Dorsolateral prefrontal cortex (tissue), 120 donors: ENCODE measurements at regions of chr9 and their contacts with region 1.

Region 1: DNA sequence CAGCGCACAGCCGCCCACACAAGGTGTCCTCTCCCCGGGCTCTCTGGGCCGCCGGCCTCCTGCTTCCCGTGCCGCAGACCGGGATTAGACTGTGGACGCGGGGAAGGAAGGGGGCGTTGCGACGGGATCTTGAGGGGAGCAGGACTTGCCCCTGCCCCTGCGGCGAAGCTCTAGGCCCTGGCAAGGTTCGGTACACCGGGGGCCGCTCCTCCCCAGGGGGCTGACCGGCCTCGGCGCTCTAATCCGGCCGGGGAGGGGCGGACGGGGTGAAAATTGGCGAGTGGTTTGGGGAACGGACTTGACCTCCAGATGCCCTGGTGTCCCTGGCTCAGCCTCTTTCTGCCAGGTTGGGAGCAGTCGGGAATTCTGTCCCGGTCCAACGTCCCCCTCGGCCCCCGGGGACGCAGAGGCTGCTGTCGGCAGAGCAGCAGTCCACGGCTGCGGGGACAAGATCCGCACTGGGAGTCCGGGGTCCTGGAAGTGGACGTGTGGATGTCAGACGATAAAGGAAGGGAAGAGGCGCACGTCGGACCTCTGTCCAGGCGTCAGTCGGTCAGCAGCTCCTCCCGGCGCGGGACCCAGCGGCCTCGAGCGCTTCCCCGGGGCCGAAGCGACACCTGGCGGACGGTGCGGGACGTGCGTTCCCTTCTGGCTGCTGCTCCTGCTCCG is 1.9 kb upstream of the CNTFR start:
- DNase-seq: peak; percentile 77 to 93 (median 86)
- H3K4me3 ChIP-seq: peak overlapping the region in 49 of 59 donors; percentile 1 to 78 (median 59)
- H3K27ac ChIP-seq: peak overlapping the region in 42 of 59 donors; percentile 6 to 90 (median 80)
- H3K27me3 ChIP-seq: peaks cover 0 to 4% (median 0%) of the 10 kb centered on the region in 45 donors
- CTCF ChIP-seq: peak; percentile 67 to 98 (median 95)

Region 2: GRCh38 chr9:34328987-34329832 is 262.2 kb before region 1 on chr9 and contains the starts of genes KIF24 and NUDT2:
- intact Hi-C with region 1: loop called (anchors 2 to 5 kb)
- DNase-seq: peak; percentile 95 to 99 (median 98)
- H3K4me3 ChIP-seq: peak within 1 kb of the TSS; percentile 60 to 99 (median 85)
- H3K27ac ChIP-seq: peak within 1 kb of the TSS; percentile 80 to 98 (median 93)
- H3K27me3 ChIP-seq: no peaks in the 10 kb centered on the region
- CTCF ChIP-seq: peak in 29 of 56 donors; percentile 4 to 51 (median 19)
- total RNA-seq, gene KIF24: 0.61 to 3.8 (median 1.6) TPM
- total RNA-seq, gene NUDT2: 9.9 to 32.0 (median 20.6) TPM

Region 3: DNA sequence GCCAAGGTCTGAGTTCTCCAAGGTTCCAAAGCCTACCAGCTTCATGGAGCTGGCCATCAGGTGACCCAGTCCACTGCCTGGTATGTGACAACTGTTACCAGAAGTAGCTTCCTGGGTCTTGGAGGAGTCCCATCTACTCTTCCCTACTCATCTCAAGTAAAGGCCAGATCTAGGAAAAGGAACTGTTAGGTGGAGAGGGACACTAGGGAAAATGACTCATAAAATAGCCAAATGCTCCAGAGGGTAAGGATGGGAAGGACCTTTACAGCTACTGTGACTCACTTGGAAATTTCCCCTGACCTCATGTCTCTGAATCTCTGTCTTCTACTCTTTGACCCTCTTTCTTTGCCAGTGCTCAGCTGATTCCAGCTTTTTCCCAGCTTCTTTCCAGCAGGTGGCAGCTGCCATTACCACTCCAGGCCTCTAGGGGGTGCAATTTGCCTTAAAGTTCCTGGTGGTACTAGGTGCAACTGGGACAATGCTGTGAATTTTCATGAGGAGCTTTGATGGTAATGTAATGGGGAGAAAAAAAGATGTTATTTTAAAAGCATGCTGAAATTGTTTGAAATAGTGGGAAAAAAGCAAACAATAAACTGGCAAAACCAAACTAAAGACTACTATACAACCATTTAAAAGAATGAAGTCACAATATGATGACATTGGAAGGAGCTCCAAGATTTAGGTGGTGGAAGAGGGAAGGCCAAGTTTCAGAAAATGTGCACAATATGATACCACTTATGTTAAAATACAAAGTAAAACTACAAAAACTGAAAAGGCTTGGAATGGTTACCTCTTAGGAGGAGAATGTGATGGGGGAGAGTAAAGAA is 187.6 kb before region 1 on chr9:
- intact Hi-C with region 1: loop called (anchors 5 to 10 kb)
- DNase-seq: peak; percentile 67 to 87 (median 75)
- H3K4me3 ChIP-seq: no peak overlapping the region
- H3K27ac ChIP-seq: peak overlapping the region in 1 of 59 donors; percentile 4
- H3K27me3 ChIP-seq: no peaks in the 10 kb centered on the region
- CTCF ChIP-seq: peak; percentile 83 to 100 (median 98)

Region 4: DNA sequence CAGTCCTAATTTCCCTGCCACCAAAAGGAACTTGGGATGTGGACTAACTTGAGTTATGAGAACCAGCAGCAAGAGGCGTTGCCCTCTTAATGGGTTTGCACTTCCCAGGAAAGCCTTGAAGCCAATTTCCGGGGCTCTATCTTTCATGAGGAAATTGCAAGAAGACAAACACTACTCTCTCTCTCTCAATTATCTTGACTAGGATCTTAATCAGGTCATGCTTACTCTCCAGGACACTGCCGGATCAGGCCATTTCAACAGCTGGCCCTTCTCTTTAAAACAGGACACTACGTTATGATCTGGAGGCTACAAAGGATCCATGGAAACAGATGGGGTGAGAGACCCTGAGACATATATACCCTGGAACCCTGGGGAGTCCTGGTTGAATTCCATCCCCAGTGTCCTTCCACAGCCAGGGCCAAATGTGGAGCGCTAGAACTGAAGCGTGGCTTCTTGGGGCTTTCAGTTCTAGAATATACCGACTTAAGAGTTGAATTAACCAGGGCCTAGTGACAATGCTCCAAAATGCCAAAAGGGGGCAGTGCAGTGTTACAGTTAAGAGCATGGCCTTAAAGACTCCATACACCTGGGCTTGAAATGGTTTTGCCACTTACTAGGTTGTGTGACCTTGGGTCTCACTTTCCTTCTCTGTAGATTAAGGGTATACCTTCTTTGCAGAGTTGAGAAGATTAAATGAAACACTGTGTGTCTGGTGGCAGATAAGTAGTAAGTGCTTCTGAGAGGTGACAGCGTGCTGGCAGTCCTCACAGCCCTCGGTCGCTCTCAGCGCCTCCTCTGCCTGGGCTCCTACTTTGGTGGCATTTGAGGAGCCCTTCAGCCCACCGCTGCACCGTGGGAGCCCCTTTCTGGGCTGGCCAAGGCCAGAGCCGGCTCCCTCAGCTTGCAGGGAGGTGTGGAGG is 154.1 kb before region 1 on chr9:
- intact Hi-C with region 1: loop called (anchors 5 to 10 kb)
- DNase-seq: peak in 6 of 10 donors; percentile 38 to 70 (median 42)
- H3K4me3 ChIP-seq: no peak overlapping the region
- H3K27ac ChIP-seq: peak overlapping the region in 3 of 59 donors; percentile 25 to 79 (median 60)
- H3K27me3 ChIP-seq: no peaks in the 10 kb centered on the region
- CTCF ChIP-seq: peak in 55 of 56 donors; percentile 43 to 84 (median 73)

Region 5: GRCh38 chr9:34458013-34458958 is 133.1 kb before region 1 on chr9 and contains the starts of genes DNAI1 and FAM219A:
- intact Hi-C with region 1: loop called (anchors 5 kb)
- DNase-seq: peak; percentile 98 to 100 (median 99)
- H3K4me3 ChIP-seq: peak within 1 kb of the TSS; percentile 54 to 96 (median 83)
- H3K27ac ChIP-seq: peak within 1 kb of the TSS in 57 of 59 donors; percentile 3 to 92 (median 73)
- H3K27me3 ChIP-seq: no peaks in the 10 kb centered on the region
- CTCF ChIP-seq: peak in 26 of 56 donors; percentile 5 to 58 (median 28)
- total RNA-seq, gene DNAI1: 1.0 to 11.2 (median 4.2) TPM
- total RNA-seq, gene FAM219A: 93.3 to 167 (median 131) TPM

Region 6: DNA sequence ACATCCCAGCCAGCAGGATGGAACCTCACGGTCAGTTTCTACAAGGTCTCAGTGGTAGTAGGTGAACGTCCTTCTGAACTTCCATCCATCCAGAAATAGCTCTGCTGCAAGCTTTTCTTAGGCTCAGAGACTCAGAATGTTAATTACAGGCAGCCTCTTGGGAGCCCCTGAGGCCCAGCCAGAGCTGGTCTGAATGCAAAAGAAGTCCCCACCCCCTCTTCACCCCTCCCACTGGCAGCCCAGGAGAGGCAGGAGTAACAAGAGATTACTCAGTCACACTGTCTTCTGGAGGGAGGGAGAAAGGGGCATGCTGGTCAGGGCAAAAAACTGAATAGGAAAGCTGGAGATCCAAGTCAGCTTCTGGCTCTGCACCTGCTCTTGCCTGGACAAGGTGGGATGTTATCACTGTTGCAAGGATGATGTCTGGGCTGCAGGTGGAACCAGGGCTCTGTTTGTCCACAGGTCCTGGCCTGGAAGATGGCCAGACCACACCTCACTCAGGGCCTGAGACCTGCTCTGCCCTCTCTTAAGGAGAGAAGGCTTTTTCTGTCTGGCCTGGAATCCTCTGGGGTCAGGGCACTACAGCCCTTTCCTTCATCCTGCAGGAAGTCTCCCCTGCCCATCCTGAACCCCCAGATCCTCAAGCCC is 77.7 kb before region 1 on chr9:
- intact Hi-C with region 1: no loop called
- DNase-seq: peak in 2 of 10 donors; percentile 28 to 38
- H3K4me3 ChIP-seq: no peak overlapping the region
- H3K27ac ChIP-seq: peak overlapping the region in 45 of 59 donors; percentile 8 to 87 (median 62)
- H3K27me3 ChIP-seq: no peaks in the 10 kb centered on the region
- CTCF ChIP-seq: no peak

Region 7: DNA sequence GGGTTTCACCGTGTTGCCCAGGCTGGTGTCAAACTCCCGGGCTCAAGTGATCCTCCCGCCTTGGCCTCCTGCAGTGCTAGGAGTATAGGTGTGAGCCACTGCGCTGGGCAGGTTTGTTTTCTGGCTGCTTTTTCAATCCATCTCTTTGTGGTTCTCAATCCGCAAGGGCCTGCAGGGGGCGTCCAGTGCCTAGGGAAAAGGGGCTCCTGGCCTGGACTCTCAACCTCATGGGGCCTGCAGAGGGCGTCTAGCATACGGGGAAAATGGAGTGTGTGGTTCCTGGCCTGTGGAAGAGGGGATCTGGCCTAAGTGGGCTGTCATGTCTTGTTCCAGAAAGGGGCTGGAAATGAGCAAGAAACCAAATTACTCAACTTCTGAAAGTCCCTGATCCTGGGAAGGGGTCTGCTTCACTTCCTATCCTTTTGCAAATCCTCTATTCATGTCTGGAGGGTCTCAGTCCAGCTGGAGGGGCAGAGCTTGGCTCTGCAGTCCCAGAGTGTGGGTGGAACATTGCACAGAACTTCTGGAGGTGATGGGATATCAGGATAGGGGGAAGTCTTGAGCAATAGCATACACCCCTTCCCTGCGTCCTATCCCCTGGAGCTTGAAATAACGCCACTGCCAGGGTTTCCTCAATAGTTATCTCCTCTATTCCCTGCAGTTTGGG is 83.8 kb after region 1 on chr9:
- intact Hi-C with region 1: no loop called
- DNase-seq: peak in 4 of 10 donors; percentile 17 to 57 (median 38)
- H3K4me3 ChIP-seq: no peak overlapping the region
- H3K27ac ChIP-seq: no peak overlapping the region
- H3K27me3 ChIP-seq: no peaks in the 10 kb centered on the region
- CTCF ChIP-seq: peak in 53 of 56 donors; percentile 7 to 61 (median 47)